Uterus (tissue), 4 donors: ENCODE measurements at regions of chr16 and their contacts with region 1.

Region 1: DNA sequence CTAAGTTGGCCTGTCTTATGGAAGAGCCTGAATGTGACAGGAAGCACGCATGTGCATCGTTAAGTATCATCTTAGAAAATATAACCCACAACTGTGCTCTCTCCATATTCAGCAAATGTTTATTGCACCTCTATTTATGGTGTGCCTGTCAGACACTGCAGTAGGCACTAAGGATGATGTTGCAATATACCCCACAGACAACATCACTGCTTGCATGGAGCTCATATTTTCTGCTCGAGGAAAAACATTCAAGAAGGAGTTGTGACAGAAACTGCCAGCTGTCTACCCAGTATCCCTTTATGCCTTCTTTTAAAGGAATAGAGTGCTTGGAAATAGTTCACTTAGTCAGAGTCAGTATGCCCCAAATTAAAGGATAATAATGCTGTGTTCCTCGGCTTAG is 132.3 kb upstream of the RBFOX1 start:
- DNase-seq: no peak
- H3K4me3 ChIP-seq: no peak overlapping the region
- H3K27ac ChIP-seq: no peak overlapping the region
- H3K4me1 ChIP-seq: no peaks in the 10 kb centered on the region
- H3K27me3 ChIP-seq: no peaks in the 10 kb centered on the region
- CTCF ChIP-seq: no peak
- POLR2A ChIP-seq: no peak

Region 2: GRCh38 chr16:7246578-7246977 is 46.3 kb after region 1 on chr16:
- intact Hi-C with region 1: no loop called
- DNase-seq: no peak
- H3K4me3 ChIP-seq: no peak overlapping the region
- H3K27ac ChIP-seq: no peak overlapping the region
- H3K4me1 ChIP-seq: no peaks in the 10 kb centered on the region
- H3K27me3 ChIP-seq: no peaks in the 10 kb centered on the region
- CTCF ChIP-seq: no peak
- POLR2A ChIP-seq: no peak

Region 3: DNA sequence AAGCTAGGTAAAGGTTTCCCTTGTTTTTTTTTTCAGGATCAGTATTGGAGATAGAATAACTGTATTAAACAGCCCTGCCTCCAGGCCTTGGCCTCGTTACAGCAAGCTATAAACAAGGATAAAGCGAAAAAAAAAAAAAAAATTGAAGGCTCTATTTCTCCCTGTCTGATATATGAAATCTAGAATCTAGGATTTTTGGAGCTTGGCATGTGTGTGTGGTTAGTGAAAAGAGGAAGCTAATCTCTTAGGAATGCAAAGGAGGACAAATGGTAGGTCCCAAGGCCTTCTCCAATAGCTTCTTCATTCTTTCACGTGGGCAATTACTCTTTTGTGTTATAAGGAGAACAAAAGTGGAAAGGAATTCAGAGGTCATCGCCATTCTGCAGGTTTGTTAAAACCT is 919.7 kb after region 1 on chr16:
- intact Hi-C with region 1: loop called (anchors 5 kb)
- DNase-seq: no peak
- H3K4me3 ChIP-seq: no peak overlapping the region
- H3K27ac ChIP-seq: no peak overlapping the region
- H3K4me1 ChIP-seq: no peaks in the 10 kb centered on the region
- H3K27me3 ChIP-seq: no peaks in the 10 kb centered on the region
- CTCF ChIP-seq: no peak
- POLR2A ChIP-seq: no peak